ENCODE measurements at regions of chr12 and their contacts with region 1.

Region 1: GRCh38 chr12:51368640-51369517 is 22.3 kb downstream of the GALNT6 start:
- DNase-seq: peak; percentile 81
- ATAC-seq: peak; percentile 95
- H3K4me3 Mint-ChIP-seq: peak overlapping the region; percentile 80
- H3K27ac Mint-ChIP-seq: peak overlapping the region; percentile 90
- H3K4me1 Mint-ChIP-seq: peaks cover 65% of the 10 kb centered on the region
- H3K27me3 Mint-ChIP-seq: no peaks in the 10 kb centered on the region
- CTCF ChIP-seq: no peak

Region 2: DNA sequence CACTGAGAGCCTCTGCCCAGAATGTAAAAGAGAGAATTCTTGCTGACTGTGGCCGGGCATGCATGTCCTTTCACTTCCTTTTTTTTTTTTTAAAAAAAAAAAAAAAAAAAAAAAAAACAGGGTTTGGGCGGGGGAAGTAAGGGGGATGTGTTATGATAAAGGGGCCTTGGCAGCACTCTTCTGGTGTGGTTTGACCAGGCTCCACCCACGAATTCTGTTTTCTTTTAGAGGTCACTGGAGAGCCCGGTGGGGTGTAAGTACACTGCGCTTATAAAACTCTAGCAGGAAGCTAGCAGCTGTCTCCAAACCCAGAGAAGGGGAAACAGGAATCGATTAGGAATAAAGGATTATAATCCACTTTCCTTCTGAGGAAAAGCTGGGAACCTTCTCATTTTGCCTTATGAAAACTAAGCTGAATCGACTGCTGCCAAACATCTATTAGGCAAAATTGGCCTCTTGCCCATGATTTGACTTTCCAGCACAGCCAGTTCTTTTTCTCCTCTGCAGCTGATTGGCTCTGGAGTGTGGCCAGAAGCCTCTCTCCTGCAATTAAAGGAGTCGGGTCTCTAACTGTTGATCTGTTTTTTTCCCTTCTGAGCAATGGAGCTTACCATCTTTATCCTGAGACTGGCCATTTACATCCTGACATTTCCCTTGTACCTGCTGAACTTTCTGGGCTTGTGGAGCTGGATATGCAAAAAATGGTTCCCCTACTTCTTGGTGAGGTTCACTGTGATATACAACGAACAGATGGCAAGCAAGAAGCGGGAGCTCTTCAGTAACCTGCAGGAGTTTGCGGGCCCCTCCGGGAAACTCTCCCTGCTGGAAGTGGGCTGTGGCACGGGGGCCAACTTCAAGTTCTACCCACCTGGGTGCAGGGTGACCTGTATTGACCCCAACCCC is 444.2 kb before region 1 on chr12:
- CTCF ChIA-PET with region 1: no interaction called
- POLR2A ChIA-PET with region 1: interaction called, 3 read pairs
- intact Hi-C with region 1: loop called (anchors 10 kb)
- DNase-seq: peak; percentile 49
- ATAC-seq: peak; percentile 88
- H3K4me3 Mint-ChIP-seq: peak overlapping the region; percentile 97
- H3K27ac Mint-ChIP-seq: peak overlapping the region; percentile 98
- H3K4me1 Mint-ChIP-seq: peaks cover 75% of the 10 kb centered on the region
- H3K27me3 Mint-ChIP-seq: no peaks in the 10 kb centered on the region
- CTCF ChIP-seq: no peak

Region 3: DNA sequence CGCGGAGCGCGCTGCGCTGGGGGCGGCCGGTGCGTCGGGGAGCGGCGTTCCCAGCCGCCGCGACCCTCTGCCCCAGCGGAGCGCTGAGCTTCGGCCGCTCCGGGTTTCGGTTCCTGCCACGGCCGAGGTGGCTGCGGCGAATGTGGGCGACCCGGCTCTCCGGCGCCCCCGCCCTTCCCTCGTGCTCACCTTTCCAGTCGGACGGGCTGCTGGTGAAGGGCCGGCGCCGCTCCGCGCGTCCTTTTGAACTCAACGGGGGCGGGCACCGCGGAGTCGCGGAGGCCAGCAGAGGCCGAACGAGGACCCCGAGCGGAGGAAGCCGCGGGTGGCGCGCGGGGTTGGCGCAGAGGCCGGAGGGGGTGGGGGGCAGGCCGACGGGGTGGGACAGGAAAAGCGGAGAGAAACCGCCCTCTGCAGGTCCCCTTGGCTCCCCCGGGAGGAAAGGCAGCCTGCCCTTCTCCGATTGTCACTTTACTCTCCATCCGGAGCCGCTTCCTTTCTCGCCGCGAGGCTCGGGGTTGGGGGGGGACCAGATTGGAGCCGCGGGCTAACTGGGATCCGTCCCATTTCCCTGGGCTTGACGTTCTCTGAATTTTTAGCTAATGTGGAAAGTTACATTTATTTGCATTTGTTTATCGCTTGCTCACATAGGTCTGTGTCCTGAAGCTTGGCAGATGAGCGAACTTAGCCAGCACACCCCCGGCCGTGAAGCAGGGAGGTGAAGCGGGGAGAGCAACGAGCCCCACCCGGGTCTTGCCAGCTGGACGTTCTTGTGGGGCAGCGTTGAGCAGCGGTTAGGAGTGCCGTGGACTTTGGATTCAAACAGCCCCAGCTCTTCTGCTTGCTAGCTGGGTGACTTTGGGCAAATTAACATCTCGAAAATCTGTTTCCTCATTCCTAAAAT is 98.6 kb before region 1 on chr12 and contains the start of gene SMAGP:
- CTCF ChIA-PET with region 1: no interaction called
- POLR2A ChIA-PET with region 1: no interaction called
- intact Hi-C with region 1: loop called (anchors 1 kb)
- DNase-seq: peak; percentile 69
- ATAC-seq: peak; percentile 73
- H3K4me3 Mint-ChIP-seq: peak within 1 kb of the TSS; percentile 89
- H3K27ac Mint-ChIP-seq: peak within 1 kb of the TSS; percentile 80
- H3K4me1 Mint-ChIP-seq: peaks cover 26% of the 10 kb centered on the region
- H3K27me3 Mint-ChIP-seq: no peaks in the 10 kb centered on the region
- CTCF ChIP-seq: no peak
- total RNA-seq, gene SMAGP: 11.4 and 11.5 TPM in 2 replicates

Region 4: GRCh38 chr12:51357374-51358047 is 11.4 kb before region 1 on chr12:
- CTCF ChIA-PET with region 1: interaction called, 4 read pairs
- POLR2A ChIA-PET with region 1: interaction called, 63 read pairs
- intact Hi-C with region 1: loop called (anchors 1 kb)
- DNase-seq: peak; percentile 58
- ATAC-seq: peak; percentile 90
- H3K4me3 Mint-ChIP-seq: peak overlapping the region; percentile 65
- H3K27ac Mint-ChIP-seq: peak overlapping the region; percentile 42
- H3K4me1 Mint-ChIP-seq: peaks cover 38% of the 10 kb centered on the region
- H3K27me3 Mint-ChIP-seq: no peaks in the 10 kb centered on the region
- CTCF ChIP-seq: no peak

Region 5: GRCh38 chr12:51531978-51532497 is 163.2 kb after region 1 on chr12:
- CTCF ChIA-PET with region 1: interaction called, 5 read pairs
- POLR2A ChIA-PET with region 1: no interaction called
- intact Hi-C with region 1: loop called (anchors 5 kb)
- DNase-seq: peak; percentile 56
- ATAC-seq: peak; percentile 97
- H3K4me3 Mint-ChIP-seq: no peak overlapping the region
- H3K27ac Mint-ChIP-seq: no peak overlapping the region
- H3K4me1 Mint-ChIP-seq: peaks cover 11% of the 10 kb centered on the region
- H3K27me3 Mint-ChIP-seq: peaks cover 28% of the 10 kb centered on the region
- CTCF ChIP-seq: peak; percentile 51

Region 6: GRCh38 chr12:52358575-52359350 is 989.9 kb after region 1 on chr12:
- CTCF ChIA-PET with region 1: no interaction called
- POLR2A ChIA-PET with region 1: no interaction called
- intact Hi-C with region 1: no loop called
- DNase-seq: peak; percentile 24
- ATAC-seq: peak; percentile 94
- H3K4me3 Mint-ChIP-seq: no peak overlapping the region
- H3K27ac Mint-ChIP-seq: peak overlapping the region; percentile 57
- H3K4me1 Mint-ChIP-seq: peaks cover 29% of the 10 kb centered on the region
- H3K27me3 Mint-ChIP-seq: peaks cover 6% of the 10 kb centered on the region
- CTCF ChIP-seq: no peak

Measured in activated B cell treated with CpG ODN at 0.5 μM for 24 hours (primary cell).